CD4-positive, alpha-beta T cell (primary cell): ENCODE measurements at regions of chr3 and their contacts with region 1.

Region 1: GRCh38 chr3:133799794-133800585 is 5.6 kb upstream of the SRPRB start:
- DNase-seq: peak in 2 of 14 experiments; percentile 25 to 40
- ATAC-seq: no peak
- H3K4me3 ChIP-seq: no peak overlapping the region
- H3K4me3 Mint-ChIP-seq: no peak overlapping the region
- H3K27ac ChIP-seq: no peak overlapping the region
- H3K27ac Mint-ChIP-seq: no peak overlapping the region
- H3K4me1 ChIP-seq: peaks cover 2% of the 10 kb centered on the region
- H3K4me1 Mint-ChIP-seq: peaks cover 2% of the 10 kb centered on the region
- H3K27me3 ChIP-seq: no peaks in the 10 kb centered on the region
- H3K27me3 Mint-ChIP-seq: peaks cover 25% of the 10 kb centered on the region
- CTCF ChIP-seq: no peak

Region 2: GRCh38 chr3:134485718-134486576 is 686.0 kb after region 1 on chr3 and contains the starts of genes ANAPC13 and CEP63:
- CTCF ChIA-PET with region 1: no interaction called
- POLR2A ChIA-PET with region 1: no interaction called
- intact Hi-C with region 1: loop called in 1 of 2 experiments (anchors 5 kb)
- DNase-seq: peak; percentile 84 to 99 (median 90)
- ATAC-seq: peak; percentile 76
- H3K4me3 ChIP-seq: peak within 1 kb of the TSS; percentile 96
- H3K4me3 Mint-ChIP-seq: peak within 1 kb of the TSS; percentile 100
- H3K27ac ChIP-seq: peak within 1 kb of the TSS; percentile 86 to 95
- H3K27ac Mint-ChIP-seq: peak within 1 kb of the TSS; percentile 98
- H3K4me1 ChIP-seq: peaks cover 29% of the 10 kb centered on the region
- H3K4me1 Mint-ChIP-seq: peaks cover 71% of the 10 kb centered on the region
- H3K27me3 ChIP-seq: no peaks in the 10 kb centered on the region
- H3K27me3 Mint-ChIP-seq: no peaks in the 10 kb centered on the region
- CTCF ChIP-seq: no peak
- total RNA-seq, gene ANAPC13: 12.9 to 16.8 TPM
- total RNA-seq, gene CEP63: 13.2 to 15.1 TPM